Right cardiac atrium (tissue), 5 donors: ENCODE measurements at regions of chr7 and their contacts with region 1.

Region 1: DNA sequence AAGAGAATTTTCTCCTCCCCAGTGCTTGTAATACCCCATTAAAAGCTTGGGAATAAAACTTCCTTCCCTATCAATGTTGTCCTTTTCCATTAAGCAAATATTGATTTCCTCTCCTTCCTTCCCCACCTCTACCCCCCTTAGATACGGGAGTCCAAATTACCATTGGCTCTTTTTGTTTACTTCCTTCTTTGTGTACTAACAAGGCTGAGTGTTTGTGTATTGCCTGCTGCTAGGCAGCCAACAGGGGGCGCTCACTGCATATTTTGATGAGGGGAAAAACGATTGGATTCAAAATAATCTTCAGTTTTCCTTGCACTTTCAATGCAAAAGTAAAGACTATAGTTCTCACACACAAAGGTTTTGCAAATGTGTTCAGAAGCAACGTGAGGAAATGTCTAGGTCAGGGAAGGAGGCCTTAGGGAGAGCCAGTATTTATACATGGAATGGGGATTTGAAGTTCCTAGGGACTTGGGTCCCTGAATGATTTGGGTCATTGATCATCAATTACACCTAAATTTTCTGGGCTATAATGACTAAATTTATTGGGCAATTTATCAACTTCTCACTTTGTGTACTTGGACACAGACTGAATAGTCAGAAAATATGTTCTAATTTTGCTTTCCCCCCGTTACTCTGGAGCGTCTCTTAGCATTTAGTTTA is 23.6 kb upstream of the VPS41 start:
- DNase-seq: peak; percentile 57 to 86 (median 79)
- ATAC-seq: no peak
- H3K4me3 ChIP-seq: no peak overlapping the region
- H3K27ac ChIP-seq: no peak overlapping the region
- H3K4me1 ChIP-seq: no peaks in the 10 kb centered on the region
- H3K27me3 ChIP-seq: no peaks in the 10 kb centered on the region

Region 2: GRCh38 chr7:38796626-38797501 is 135.8 kb before region 1 on chr7:
- intact Hi-C with region 1: loop called in 2 of 4 experiments (anchors 10 kb)
- DNase-seq: peak in 2 of 3 donors; percentile 40 to 61
- ATAC-seq: no peak
- H3K4me3 ChIP-seq: no peak overlapping the region
- H3K27ac ChIP-seq: no peak overlapping the region
- H3K4me1 ChIP-seq: no peaks in the 10 kb centered on the region
- H3K27me3 ChIP-seq: no peaks in the 10 kb centered on the region

Region 3: GRCh38 chr7:39238234-39238869 is 305.7 kb after region 1 on chr7:
- intact Hi-C with region 1: no loop called
- DNase-seq: no peak
- ATAC-seq: no peak
- H3K4me3 ChIP-seq: no peak overlapping the region
- H3K27ac ChIP-seq: no peak overlapping the region
- H3K4me1 ChIP-seq: peaks cover 1% of the 10 kb centered on the region
- H3K27me3 ChIP-seq: no peaks in the 10 kb centered on the region

Region 4: GRCh38 chr7:39465055-39465929 is 532.7 kb after region 1 on chr7:
- intact Hi-C with region 1: loop called (anchors 5 to 10 kb)
- DNase-seq: peak in 1 of 3 donors; percentile 15
- ATAC-seq: peak; percentile 68 to 76
- H3K4me3 ChIP-seq: no peak overlapping the region
- H3K27ac ChIP-seq: no peak overlapping the region
- H3K4me1 ChIP-seq: no peaks in the 10 kb centered on the region
- H3K27me3 ChIP-seq: no peaks in the 10 kb centered on the region

Region 5: GRCh38 chr7:39510864-39511354 is 578.3 kb after region 1 on chr7:
- intact Hi-C with region 1: loop called (anchors 5 to 10 kb)
- DNase-seq: no peak
- ATAC-seq: no peak
- H3K4me3 ChIP-seq: no peak overlapping the region
- H3K27ac ChIP-seq: no peak overlapping the region
- H3K4me1 ChIP-seq: no peaks in the 10 kb centered on the region
- H3K27me3 ChIP-seq: no peaks in the 10 kb centered on the region

Region 6: DNA sequence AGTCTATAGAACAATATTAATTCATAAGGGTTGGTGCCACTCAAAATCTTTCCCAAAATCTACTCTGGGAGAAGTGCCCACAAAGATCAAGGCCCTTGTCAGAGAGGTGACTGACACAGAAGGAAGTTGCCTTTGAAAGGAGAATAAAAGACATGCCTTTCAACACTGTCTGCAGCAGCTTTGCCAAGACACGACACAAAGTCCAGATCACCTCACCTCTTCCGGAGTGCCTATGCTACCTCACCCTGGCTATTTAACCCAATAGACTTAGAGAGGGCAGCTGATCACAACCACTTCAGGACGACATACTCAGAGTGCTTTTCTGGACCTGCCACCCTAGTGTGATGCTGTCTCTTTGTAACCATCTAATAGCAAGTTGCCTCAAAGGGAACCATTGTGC is 584.6 kb after region 1 on chr7:
- intact Hi-C with region 1: loop called (anchors 5 to 10 kb)
- DNase-seq: no peak
- ATAC-seq: no peak
- H3K4me3 ChIP-seq: no peak overlapping the region
- H3K27ac ChIP-seq: no peak overlapping the region
- H3K4me1 ChIP-seq: no peaks in the 10 kb centered on the region
- H3K27me3 ChIP-seq: no peaks in the 10 kb centered on the region